Activated naive CD4-positive, alpha-beta T cell treated with anti-CD3 and anti-CD28 coated beads for 36 hours (primary cell): ENCODE measurements at regions of chr15 and their contacts with region 1.

Region 1: GRCh38 chr15:59528965-59529402 is 82.6 kb upstream of the GCNT3 start:
- DNase-seq: peak; percentile 84
- H3K4me3 Mint-ChIP-seq: no peak overlapping the region
- H3K27ac Mint-ChIP-seq: no peak overlapping the region
- H3K4me1 Mint-ChIP-seq: peaks cover 17% of the 10 kb centered on the region
- H3K27me3 Mint-ChIP-seq: no peaks in the 10 kb centered on the region

Region 2: GRCh38 chr15:58980351-58980939 is 548.5 kb before region 1 on chr15:
- CTCF ChIA-PET with region 1: interaction called, 8 read pairs
- intact Hi-C with region 1: loop called (anchors 1 kb)
- DNase-seq: no peak
- H3K4me3 Mint-ChIP-seq: no peak overlapping the region
- H3K27ac Mint-ChIP-seq: no peak overlapping the region
- H3K4me1 Mint-ChIP-seq: peaks cover 33% of the 10 kb centered on the region
- H3K27me3 Mint-ChIP-seq: no peaks in the 10 kb centered on the region

Region 3: GRCh38 chr15:59492389-59493377 is 36.3 kb before region 1 on chr15:
- CTCF ChIA-PET with region 1: interaction called, 10 read pairs
- intact Hi-C with region 1: no loop called
- DNase-seq: peak; percentile 64
- H3K4me3 Mint-ChIP-seq: no peak overlapping the region
- H3K27ac Mint-ChIP-seq: no peak overlapping the region
- H3K4me1 Mint-ChIP-seq: peaks cover 2% of the 10 kb centered on the region
- H3K27me3 Mint-ChIP-seq: no peaks in the 10 kb centered on the region

Region 4: GRCh38 chr15:59515190-59515589 is 13.8 kb before region 1 on chr15:
- CTCF ChIA-PET with region 1: interaction called, 20 read pairs
- intact Hi-C with region 1: no loop called
- DNase-seq: no peak
- H3K4me3 Mint-ChIP-seq: no peak overlapping the region
- H3K27ac Mint-ChIP-seq: no peak overlapping the region
- H3K4me1 Mint-ChIP-seq: peaks cover 4% of the 10 kb centered on the region
- H3K27me3 Mint-ChIP-seq: no peaks in the 10 kb centered on the region

Region 5: DNA sequence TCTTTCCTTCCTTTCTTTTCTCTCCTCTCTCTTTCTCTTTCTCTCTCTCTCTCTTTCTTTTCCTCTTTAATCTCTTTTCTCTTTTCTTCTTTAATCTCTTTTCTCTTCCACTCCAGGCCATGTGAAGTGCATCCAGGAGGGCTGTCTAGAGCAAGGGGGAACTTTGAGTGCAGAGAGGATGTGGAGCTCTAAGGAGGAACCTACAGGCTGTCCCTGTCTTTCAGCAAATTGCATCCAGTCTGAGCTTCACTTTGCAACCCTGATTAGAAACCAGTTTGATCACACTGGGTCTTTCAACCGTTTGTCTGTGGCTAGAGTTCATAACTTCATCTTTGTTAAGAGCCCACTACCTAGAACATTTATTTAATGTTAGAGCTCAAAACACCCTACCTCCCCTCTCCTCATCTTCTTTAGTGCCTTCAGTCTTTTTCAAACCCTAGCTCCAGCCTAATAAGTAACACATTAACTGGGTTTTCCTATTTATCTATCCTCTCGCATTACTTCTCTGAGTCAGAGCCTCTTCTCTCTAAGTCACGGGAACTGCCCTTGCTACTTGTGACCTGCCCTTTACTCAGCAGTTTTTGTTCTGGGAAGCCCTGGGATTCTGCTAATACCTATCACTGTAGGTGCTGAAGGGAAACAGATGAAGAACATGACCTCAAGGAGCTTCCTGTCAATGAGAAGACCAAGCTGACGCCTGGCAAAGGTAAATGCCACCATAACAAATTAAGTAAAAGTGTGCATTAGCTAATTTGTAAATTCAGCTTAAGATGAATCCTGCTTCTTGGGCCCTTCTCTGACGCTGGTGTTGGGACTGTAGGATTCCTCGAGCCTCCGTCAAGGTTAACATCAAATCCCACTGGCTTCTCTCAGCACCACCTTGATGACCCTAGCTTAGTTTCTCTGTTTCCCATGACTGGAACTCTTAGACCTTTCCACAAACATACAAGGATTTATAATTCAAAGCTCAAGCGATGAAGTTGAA is 82.6 kb after region 1 on chr15 and contains the start of gene GCNT3:
- CTCF ChIA-PET with region 1: interaction called, 10 read pairs
- intact Hi-C with region 1: no loop called
- DNase-seq: no peak
- H3K4me3 Mint-ChIP-seq: no peak within 1 kb of the TSS
- H3K27ac Mint-ChIP-seq: no peak within 1 kb of the TSS
- H3K4me1 Mint-ChIP-seq: peaks cover 4% of the 10 kb centered on the region
- H3K27me3 Mint-ChIP-seq: peaks cover 7% of the 10 kb centered on the region
- total RNA-seq, gene GCNT3: not detected

Region 6: GRCh38 chr15:59632714-59633113 is 103.7 kb after region 1 on chr15:
- CTCF ChIA-PET with region 1: interaction called, 12 read pairs
- intact Hi-C with region 1: no loop called
- DNase-seq: no peak
- H3K4me3 Mint-ChIP-seq: no peak overlapping the region
- H3K27ac Mint-ChIP-seq: no peak overlapping the region
- H3K4me1 Mint-ChIP-seq: no peaks in the 10 kb centered on the region
- H3K27me3 Mint-ChIP-seq: peaks cover 2% of the 10 kb centered on the region

Region 7: DNA sequence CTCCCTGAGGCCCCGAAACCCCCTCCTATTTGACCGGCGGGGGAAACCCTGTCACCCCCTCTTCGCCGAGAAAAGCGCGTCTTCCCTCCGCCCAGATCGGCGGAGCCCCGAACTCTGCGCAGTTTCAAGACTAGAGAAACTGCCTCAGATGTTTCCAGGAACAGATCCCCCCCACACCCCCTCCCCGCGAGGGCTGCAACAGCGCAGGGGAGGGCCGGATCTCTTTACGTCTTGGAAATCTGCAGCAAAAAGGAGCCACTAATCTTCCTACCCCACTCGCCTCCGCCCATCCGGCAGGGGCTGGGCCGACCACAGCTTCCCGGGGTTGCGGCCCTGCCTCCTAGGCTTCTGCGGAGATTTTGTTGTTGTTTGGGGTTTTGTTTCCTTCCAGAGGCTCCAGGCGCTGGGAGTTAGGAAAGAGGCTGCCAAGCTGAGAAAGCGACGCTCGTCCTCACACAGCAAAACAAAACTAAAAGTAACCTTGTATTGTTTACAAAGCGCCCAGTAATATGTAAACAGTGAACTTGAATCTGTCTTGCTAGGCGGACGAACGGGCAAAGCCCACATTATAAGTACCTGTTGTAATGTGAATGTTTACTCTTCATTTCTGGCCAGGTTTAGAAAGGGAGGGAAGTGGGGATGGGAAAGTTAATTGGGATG is 477.3 kb after region 1 on chr15:
- CTCF ChIA-PET with region 1: no interaction called
- intact Hi-C with region 1: loop called (anchors 10 kb)
- DNase-seq: peak; percentile 83
- H3K4me3 Mint-ChIP-seq: peak overlapping the region; percentile 82
- H3K27ac Mint-ChIP-seq: peak overlapping the region; percentile 68
- H3K4me1 Mint-ChIP-seq: peaks cover 26% of the 10 kb centered on the region
- H3K27me3 Mint-ChIP-seq: peaks cover 87% of the 10 kb centered on the region